ENCODE measurements at regions of chr6 and their contacts with region 1.

Region 1: DNA sequence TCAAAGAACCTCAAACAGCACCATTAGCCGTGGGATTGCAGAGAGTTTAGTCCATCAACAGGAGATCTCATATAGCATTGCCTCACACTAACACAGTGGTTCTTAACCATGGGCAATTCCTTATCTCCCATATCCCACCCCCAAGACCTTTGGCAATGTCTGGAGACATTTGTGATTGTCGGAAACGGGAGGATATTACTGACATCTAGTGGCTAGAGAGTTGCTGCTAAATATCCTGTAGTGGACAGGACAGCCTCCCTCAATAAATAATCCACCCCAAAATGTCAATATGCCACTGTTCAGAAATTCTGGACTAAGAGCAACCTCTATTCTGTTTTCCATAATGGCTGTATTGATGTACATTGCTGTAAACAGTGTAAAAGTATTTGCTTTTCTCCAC is 210.1 kb upstream of the CCN2 start:
- DNase-seq: no peak
- ATAC-seq: peak in 1 of 4 donors; percentile 74
- H3K4me3 ChIP-seq: no peak overlapping the region
- H3K27ac ChIP-seq: no peak overlapping the region
- H3K4me1 ChIP-seq: no peaks in the 10 kb centered on the region
- H3K27me3 ChIP-seq: no peaks in the 10 kb centered on the region
- CTCF ChIP-seq: peak; percentile 37 to 76 (median 59)
- POLR2A ChIP-seq: no peak

Region 2: DNA sequence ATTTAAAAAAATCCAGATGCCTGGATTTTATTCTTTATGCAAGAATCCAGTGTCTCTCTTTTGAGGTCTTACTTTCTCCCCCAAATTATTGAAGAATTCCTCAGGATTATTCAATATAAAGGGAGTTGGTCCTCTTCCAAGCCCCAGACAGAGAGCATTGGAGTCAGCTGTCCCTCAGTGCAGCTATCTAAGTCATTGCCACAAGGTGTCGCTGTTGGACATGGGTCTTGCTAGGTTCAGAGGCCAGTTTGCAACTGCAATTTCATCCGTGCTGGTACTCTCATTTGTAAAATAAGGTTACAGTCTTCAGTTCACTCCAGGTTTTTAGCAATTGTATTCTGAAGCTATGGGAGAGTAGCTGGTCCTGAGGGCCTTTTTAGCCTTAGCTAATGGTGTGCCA is 237.9 kb before region 1 on chr6:
- intact Hi-C with region 1: loop called (anchors 1 to 5 kb)
- DNase-seq: peak in 3 of 5 donors; percentile 32 to 41 (median 35)
- ATAC-seq: peak in 2 of 4 donors; percentile 20 to 55
- H3K4me3 ChIP-seq: no peak overlapping the region
- H3K27ac ChIP-seq: no peak overlapping the region
- H3K4me1 ChIP-seq: no peaks in the 10 kb centered on the region
- H3K27me3 ChIP-seq: no peaks in the 10 kb centered on the region
- CTCF ChIP-seq: peak; percentile 22 to 68 (median 47)
- POLR2A ChIP-seq: no peak

Region 3: DNA sequence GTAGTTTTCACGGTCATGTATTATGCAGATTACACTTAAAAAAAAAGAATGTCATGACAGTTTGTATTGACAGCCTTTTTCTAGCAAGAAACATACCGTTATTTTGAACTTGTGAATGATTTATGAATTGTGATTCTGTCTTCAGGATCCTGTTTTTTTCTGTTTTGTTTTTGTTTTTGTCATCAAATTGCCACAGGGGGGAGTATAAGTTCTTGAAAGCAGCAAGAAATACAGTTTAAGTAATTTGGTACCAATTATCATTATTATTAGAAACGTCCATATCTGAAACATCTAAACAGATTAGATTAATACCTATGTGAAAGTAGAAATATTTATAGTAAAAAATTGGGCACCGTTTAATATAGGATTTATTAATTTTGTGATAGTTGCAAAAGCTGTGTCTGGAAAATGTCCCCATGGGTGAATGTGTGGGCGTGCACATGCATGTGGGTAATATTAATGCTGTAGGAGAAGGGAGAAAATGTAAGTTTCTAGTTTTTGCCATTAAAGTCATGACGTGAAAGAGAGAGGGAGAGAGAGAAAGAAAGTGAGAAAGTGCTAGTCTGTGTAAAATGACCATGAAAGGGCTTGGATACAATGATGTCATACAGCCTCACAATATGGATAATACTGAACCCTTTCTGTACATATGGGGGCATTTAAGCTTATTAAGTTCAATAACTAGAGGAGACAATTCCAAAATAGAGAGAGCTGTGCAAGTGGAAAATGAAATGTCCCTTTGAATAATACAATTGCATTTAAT is 200.7 kb before region 1 on chr6:
- intact Hi-C with region 1: loop called in 5 of 10 experiments (anchors 5 to 10 kb)
- DNase-seq: no peak
- ATAC-seq: no peak
- H3K4me3 ChIP-seq: no peak overlapping the region
- H3K27ac ChIP-seq: no peak overlapping the region
- H3K4me1 ChIP-seq: peaks cover 0 to 2% (median 0%) of the 10 kb centered on the region in 12 donors
- H3K27me3 ChIP-seq: no peaks in the 10 kb centered on the region
- CTCF ChIP-seq: peak in 9 of 12 donors; percentile 17 to 51 (median 27)
- POLR2A ChIP-seq: no peak

Region 4: GRCh38 chr6:132115714-132116366 is 45.4 kb before region 1 on chr6:
- intact Hi-C with region 1: no loop called
- DNase-seq: no peak
- ATAC-seq: peak in 2 of 4 donors; percentile 20 to 49
- H3K4me3 ChIP-seq: peak overlapping the region in 8 of 12 donors; percentile 16 to 53 (median 33)
- H3K27ac ChIP-seq: peak overlapping the region in 8 of 12 donors; percentile 19 to 70 (median 58)
- H3K4me1 ChIP-seq: peaks cover 0 to 7% (median 0%) of the 10 kb centered on the region in 12 donors
- H3K27me3 ChIP-seq: no peaks in the 10 kb centered on the region
- CTCF ChIP-seq: no peak
- POLR2A ChIP-seq: no peak

Region 5: DNA sequence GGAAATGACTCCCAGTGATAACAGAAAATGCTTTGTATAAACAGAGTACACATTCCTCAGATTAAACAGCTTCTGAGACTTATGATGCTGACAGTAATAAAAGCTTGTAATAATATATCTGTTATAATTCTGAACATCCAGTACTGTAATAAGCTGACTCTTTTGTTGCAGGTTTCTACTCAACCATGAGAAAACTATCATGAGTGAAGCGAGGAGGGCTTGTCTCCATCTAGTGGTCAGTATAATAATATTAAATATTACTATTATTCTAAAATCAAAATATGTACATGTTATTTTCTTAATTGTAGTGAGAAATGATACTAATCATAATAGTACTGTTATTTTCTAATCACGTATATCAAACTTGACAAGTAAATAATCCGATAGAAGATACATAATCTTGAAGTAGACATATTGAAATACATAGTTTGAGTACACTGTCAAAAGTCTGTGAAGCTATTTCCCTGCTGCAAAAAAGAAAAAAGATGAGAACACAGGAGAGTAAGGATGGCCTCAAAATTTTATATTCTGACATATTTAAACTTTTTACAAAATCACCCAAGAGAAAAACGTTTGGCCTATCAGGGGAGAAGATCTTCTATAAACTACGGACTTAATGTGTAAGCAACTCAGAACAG is 56.9 kb after region 1 on chr6:
- intact Hi-C with region 1: loop called in 4 of 10 experiments (anchors 5 to 10 kb)
- DNase-seq: no peak
- ATAC-seq: peak in 2 of 4 donors; percentile 39 to 42
- H3K4me3 ChIP-seq: no peak overlapping the region
- H3K27ac ChIP-seq: peak overlapping the region in 2 of 12 donors; percentile 7 to 22
- H3K4me1 ChIP-seq: peaks cover 0 to 6% (median 0%) of the 10 kb centered on the region in 12 donors
- H3K27me3 ChIP-seq: peaks cover 0 to 3% (median 0%) of the 10 kb centered on the region in 9 donors
- CTCF ChIP-seq: peak; percentile 43 to 79 (median 58)
- POLR2A ChIP-seq: no peak

Region 6: GRCh38 chr6:132481189-132481588 is 319.9 kb after region 1 on chr6:
- intact Hi-C with region 1: no loop called
- DNase-seq: no peak
- ATAC-seq: no peak
- H3K4me3 ChIP-seq: no peak overlapping the region
- H3K27ac ChIP-seq: no peak overlapping the region
- H3K4me1 ChIP-seq: peaks cover 0 to 51% (median 24%) of the 10 kb centered on the region in 12 donors
- H3K27me3 ChIP-seq: no peaks in the 10 kb centered on the region
- CTCF ChIP-seq: no peak
- POLR2A ChIP-seq: no peak